Activated naive CD4-positive, alpha-beta T cell treated with anti-CD3 and anti-CD28 coated beads for 36 hours (primary cell): ENCODE measurements at regions of chr16 and their contacts with region 1.

Region 1: GRCh38 chr16:4660454-4661007 is 32.8 kb upstream of the NUDT16L1 start:
- DNase-seq: peak; percentile 89
- H3K4me3 Mint-ChIP-seq: no peak overlapping the region
- H3K27ac Mint-ChIP-seq: peak overlapping the region; percentile 61
- H3K4me1 Mint-ChIP-seq: peaks cover 65% of the 10 kb centered on the region
- H3K27me3 Mint-ChIP-seq: no peaks in the 10 kb centered on the region

Region 2: GRCh38 chr16:4679850-4680636 is 19.5 kb after region 1 on chr16:
- CTCF ChIA-PET with region 1: interaction called, 3 read pairs
- intact Hi-C with region 1: loop called (anchors 1 kb)
- DNase-seq: no peak
- H3K4me3 Mint-ChIP-seq: no peak overlapping the region
- H3K27ac Mint-ChIP-seq: no peak overlapping the region
- H3K4me1 Mint-ChIP-seq: peaks cover 26% of the 10 kb centered on the region
- H3K27me3 Mint-ChIP-seq: no peaks in the 10 kb centered on the region